ENCODE measurements at regions of chr2 and their contacts with region 1.

Region 1: DNA sequence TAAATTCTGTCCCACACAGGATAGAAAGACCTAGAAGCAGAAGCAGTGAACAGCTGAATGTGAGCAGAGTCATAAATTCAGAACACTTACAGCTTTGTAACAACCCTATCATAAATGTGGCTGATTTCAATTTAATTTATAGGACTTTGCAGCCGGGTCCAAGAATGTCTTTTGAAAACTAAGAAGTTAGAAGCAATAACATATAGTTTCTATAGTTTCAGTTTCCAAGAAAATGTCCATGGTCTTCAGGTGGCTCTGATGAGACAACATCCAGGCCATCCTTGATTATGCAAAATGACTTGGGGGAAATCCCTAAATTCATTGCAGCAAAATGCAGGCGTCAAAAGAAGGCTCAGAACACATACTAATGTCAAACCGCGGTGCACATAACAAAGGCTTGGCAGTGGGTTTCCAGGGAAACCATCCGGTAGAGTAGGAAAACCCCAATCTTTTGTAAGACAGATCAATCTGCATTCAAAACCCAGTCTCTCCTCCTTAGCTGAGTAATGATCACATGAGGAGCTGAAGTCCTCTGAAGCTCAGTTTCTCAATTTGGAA is 442.2 kb upstream of the ID2 start:
- DNase-seq: peak; percentile 75
- H3K4me3 Mint-ChIP-seq: no peak overlapping the region
- H3K27ac Mint-ChIP-seq: no peak overlapping the region
- H3K4me1 Mint-ChIP-seq: peaks cover 18% of the 10 kb centered on the region
- H3K27me3 Mint-ChIP-seq: peaks cover 22% of the 10 kb centered on the region

Region 2: DNA sequence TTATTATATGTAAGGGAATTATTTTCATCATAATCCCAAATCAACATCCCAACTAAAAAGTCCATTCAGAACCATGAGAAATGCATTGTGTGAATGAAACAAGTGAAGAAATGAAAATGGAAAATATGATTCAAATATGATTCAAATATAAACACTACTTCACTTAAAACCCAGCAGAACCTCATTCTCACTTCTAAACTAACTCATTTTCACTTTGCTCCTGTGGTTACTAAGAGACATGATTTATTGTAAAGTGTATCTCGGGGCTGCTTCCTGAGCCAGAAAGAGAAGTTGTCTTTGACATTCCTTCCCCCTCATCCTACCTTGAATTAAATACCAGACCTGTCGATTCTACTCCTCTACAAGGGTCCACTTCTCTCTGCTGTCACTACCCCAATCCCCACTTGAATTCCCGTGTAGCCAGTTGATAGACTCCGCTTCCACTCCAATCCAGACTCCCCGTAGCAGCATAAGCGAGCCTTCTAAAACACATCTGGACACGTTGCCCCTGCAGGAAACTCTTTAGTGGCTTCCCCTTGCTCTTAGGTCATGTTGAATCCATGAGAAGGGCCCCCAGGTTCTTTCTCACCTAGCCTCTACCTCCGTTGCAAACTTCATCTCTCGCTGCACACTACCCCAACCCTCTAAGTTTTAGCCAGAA is 254.8 kb before region 1 on chr2:
- CTCF ChIA-PET with region 1: no interaction called
- intact Hi-C with region 1: loop called (anchors 1 kb)
- DNase-seq: peak; percentile 22
- H3K4me3 Mint-ChIP-seq: peak overlapping the region; percentile 8
- H3K27ac Mint-ChIP-seq: peak overlapping the region; percentile 62
- H3K4me1 Mint-ChIP-seq: peaks cover 20% of the 10 kb centered on the region
- H3K27me3 Mint-ChIP-seq: peaks cover 4% of the 10 kb centered on the region

Region 3: DNA sequence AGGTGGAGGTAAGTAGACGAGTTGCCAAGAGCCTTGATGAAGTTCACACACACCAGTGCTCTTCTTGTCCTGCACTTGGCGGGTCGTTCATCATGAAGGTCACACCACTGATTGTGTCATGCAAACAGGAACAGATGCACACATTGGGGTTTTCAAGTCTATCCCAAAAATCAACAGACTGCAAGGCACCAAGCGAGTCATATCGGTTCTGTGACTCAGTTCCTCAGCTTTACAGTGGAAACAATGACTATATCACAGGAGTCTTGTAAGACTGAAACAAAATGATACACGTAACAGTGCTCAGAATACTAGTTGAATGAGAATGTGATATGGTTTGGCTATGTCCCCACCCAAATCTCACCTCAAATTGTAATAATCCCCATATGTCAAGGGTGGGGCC is 84.7 kb before region 1 on chr2:
- CTCF ChIA-PET with region 1: no interaction called
- intact Hi-C with region 1: loop called (anchors 1 kb)
- DNase-seq: peak; percentile 68
- H3K4me3 Mint-ChIP-seq: no peak overlapping the region
- H3K27ac Mint-ChIP-seq: peak overlapping the region; percentile 78
- H3K4me1 Mint-ChIP-seq: peaks cover 16% of the 10 kb centered on the region
- H3K27me3 Mint-ChIP-seq: no peaks in the 10 kb centered on the region

Region 4: GRCh38 chr2:8520791-8521344 is 281.3 kb after region 1 on chr2:
- CTCF ChIA-PET with region 1: no interaction called
- intact Hi-C with region 1: loop called (anchors 1 kb)
- DNase-seq: peak; percentile 72
- H3K4me3 Mint-ChIP-seq: no peak overlapping the region
- H3K27ac Mint-ChIP-seq: peak overlapping the region; percentile 54
- H3K4me1 Mint-ChIP-seq: peaks cover 45% of the 10 kb centered on the region
- H3K27me3 Mint-ChIP-seq: no peaks in the 10 kb centered on the region

Measured in activated naive CD4-positive, alpha-beta T cell treated with anti-CD3 and anti-CD28 coated beads for 36 hours (primary cell).